Right ventricle myocardium inferior (tissue), 1 donor: ENCODE measurements at regions of chr11 and their contacts with region 1.

Region 1: GRCh38 chr11:65540297-65541092 is 15.6 kb downstream of the SCYL1 start:
- DNase-seq: peak; percentile 97
- ATAC-seq: peak; percentile 94

Region 2: DNA sequence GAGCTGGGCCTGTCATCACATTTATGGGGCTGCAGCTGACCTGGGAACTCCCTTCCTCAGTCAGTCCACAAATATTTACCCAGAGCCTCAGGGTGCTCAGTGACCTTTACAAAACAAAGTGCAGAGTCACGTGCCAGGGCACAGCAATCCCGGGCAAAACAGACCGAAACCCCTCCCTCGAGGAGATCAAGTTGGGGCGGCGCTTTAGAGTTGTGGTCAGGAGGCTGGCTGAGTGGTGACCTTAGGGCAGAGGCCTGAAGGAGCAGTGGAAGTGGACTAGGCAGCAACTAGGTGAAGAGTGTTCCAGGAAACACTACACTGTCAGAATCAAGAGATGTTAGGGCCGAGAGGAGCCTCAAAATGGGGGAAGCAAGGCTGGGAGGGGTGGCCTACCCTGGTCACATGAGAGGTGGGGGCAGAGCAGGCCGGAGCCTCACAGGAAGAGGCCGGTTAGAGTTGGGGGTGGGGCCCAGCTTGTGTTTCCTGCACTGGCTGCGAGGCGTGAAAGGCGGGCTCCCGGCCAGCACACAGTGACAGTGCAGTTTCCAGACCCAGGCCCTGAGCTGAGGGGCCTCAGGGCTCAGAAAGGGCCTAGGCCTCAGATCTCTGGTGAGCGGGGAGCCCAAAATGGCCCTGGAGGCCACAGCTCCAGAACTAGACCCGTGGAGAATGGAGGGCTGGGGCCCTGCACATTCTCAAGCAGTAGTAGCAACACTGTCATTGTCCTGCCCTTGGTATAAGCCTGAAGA is 121.6 kb before region 1 on chr11:
- intact Hi-C with region 1: no loop called
- DNase-seq: peak; percentile 99
- ATAC-seq: peak; percentile 51

Region 3: DNA sequence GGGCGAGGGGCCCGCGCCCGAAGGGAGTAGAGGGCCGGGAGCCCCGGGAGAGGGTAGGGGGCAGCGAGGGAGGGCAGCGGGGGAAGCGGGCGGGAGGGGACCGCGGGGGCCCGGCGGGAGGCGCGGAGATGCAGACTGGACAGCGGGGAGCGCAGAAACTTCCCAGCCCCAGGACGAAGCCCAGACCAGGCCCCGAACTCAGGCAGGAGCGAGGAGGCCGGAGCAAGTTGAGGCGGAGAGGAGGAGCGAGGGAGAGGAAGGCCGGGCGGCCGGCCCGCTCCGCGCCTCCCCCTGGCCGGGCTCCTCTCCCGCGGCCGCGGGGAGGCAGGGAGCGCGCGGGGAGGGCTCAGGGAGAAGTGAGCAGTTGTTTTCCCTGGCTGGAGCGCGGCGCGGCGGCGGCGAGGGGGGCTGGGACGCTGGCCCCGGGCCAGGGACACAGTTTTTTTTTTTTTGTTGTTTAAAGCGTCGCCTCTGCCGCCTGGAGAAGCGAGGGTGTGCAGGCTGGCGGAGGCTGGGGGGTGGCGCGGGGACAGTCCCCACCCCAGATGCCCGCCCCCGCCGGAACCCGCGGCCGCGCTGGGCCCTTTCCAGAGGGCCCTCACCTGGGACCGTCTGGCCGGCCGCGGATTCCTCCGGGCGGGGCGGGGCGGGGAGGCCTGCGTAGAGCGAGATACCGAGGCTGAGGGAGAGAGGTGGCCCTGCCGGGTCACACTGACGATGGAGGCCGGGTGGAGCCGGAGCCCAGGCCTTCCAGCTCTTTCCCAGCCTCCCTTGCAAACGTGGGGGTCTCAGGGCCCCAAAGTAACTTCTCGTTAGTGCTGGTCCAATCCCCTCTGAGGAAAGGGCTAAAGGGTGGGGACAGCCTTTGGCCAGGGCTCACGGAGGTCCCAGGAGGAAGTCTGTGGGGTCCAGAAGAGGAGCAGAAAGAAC is 17.8 kb after region 1 on chr11 and contains the start of gene LTBP3:
- intact Hi-C with region 1: loop called (anchors 1 kb)
- DNase-seq: peak; percentile 92
- ATAC-seq: peak; percentile 90
- total RNA-seq, gene LTBP3: 72.3 TPM

Region 4: DNA sequence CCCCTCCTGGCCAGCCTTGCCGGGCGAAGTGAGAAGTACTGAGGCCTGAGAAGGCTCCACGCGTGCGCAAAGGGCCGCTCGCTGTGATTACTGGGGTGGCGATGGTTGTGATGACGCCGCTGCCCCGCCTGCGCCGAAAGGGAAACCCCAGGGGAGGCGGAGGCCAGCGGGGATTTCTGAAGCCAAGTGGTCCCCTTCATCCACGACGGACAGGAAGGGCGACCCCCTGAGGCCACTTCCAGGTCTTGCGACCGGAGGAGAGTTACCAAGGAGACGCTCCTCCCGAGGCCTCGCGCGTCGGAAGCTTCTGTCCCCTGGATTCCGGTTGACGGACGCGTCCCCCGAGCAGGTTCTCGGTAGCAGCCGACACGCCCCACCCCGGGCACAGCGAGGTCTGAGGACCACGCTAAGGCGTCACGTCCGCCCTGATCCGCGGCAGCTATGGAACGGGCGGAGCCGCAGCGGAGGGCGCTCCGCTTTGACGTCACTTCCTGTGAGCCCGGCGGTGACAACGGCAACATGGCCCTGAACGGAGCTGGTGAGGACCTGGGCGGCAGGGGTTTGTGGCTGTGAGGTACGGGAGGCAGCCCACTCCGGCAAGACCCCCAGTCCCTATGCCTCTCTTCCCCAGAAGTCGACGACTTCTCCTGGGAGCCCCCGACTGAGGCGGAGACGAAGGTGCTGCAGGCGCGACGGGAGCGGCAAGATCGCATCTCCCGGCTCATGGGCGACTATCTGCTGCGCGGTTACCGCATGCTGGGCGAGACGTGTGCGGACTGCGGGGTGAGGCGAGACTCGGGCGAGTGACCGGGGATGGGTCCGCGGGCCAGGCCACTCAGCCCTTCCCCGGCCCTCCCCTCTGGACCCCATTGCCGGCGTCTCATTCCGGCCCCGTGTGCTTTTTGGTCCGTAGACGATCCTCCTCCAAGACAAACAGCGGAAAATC is 29.8 kb after region 1 on chr11 and contains the start of gene ZNRD2:
- intact Hi-C with region 1: loop called (anchors 1 kb)
- DNase-seq: peak; percentile 99
- ATAC-seq: peak; percentile 90
- total RNA-seq, gene ZNRD2: 23.3 TPM

Region 5: GRCh38 chr11:65588199-65589054 is 47.9 kb after region 1 on chr11:
- intact Hi-C with region 1: loop called (anchors 2 kb)
- DNase-seq: peak; percentile 77
- ATAC-seq: peak; percentile 51

Region 6: GRCh38 chr11:65615229-65615941 is 74.9 kb after region 1 on chr11 and contains the start of gene PCNX3:
- intact Hi-C with region 1: loop called (anchors 2 kb)
- DNase-seq: peak; percentile 100
- ATAC-seq: peak; percentile 91
- total RNA-seq, gene PCNX3: 12.4 TPM